K562 (cell line): ENCODE measurements at regions of chr1 and their contacts with region 1.

Region 1: GRCh38 chr1:246032031-246032551 is 475.0 kb downstream of the SMYD3 start:
- DNase-seq: no peak
- ATAC-seq: no peak
- H3K4me3 ChIP-seq: no peak overlapping the region
- H3K27ac ChIP-seq: no peak overlapping the region
- H3K4me1 ChIP-seq: peaks cover 3 to 13% of the 10 kb centered on the region in 2 experiments; a peak in 4 of 5 replicates
- H3K27me3 ChIP-seq: no peaks in the 10 kb centered on the region
- CTCF ChIP-seq: no peak
- EP300 ChIP-seq: no peak
- POLR2A ChIP-seq: no peak
- RAD21 ChIP-seq: no peak

Region 2: GRCh38 chr1:245986404-245987220 is 45.5 kb before region 1 on chr1:
- CTCF ChIA-PET with region 1: no interaction called
- POLR2A ChIA-PET with region 1: no interaction called
- in situ Hi-C with region 1: no loop called
- intact Hi-C with region 1: no loop called
- DNase-seq: peak; percentile 52 to 77 (median 60)
- ATAC-seq: peak; percentile 36
- H3K4me3 ChIP-seq: peak overlapping the region; percentile 53
- H3K27ac ChIP-seq: peak overlapping the region; percentile 78
- H3K4me1 ChIP-seq: peaks cover 4 to 38% of the 10 kb centered on the region in 2 experiments; a peak in 4 of 5 replicates
- H3K27me3 ChIP-seq: no peaks in the 10 kb centered on the region
- CTCF ChIP-seq: no peak
- EP300 ChIP-seq: peak; percentile 41
- POLR2A ChIP-seq: no peak
- RAD21 ChIP-seq: no peak

Region 3: DNA sequence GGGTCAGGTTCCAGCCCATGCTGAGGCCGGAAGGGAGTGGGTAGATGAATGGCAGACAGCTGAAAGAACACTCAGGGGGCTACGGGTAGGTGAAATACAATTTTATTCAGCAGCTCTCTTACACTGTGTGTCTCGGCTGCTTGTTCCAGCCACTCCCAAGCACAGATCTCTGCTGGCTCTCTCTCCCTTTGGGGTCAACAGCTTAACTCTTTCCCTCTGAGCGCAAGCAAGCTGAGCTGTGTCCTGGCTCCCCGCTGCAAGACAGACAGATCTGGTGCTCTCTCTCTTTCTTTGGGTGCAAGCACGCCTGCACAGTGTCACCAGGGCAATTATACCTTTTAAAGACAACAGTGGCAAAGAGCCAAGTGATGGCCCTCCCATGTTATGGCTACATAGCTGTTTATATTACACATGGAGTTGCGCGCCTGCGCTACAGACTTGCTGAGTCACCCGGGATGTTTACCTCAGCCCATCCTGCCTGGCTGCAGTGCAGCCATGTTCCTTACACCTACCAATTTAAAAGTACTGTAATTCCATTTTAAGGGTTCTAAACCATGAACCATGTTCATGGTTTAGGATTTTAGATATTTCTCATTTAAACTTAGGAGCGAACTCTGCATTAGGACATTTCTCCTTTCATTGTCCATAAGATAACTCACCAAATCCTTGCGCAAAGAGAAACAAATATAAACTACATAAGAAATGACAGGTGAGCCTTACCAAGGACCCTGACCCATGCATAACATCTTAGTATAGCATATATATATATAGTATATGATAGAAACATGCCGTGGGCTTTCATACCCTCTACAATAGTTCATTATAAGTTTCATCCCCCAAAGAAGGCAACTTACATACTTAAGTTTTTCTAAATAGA is 78.5 kb after region 1 on chr1:
- CTCF ChIA-PET with region 1: no interaction called
- POLR2A ChIA-PET with region 1: no interaction called
- in situ Hi-C with region 1: no loop called
- intact Hi-C with region 1: loop called (anchors 5 kb)
- DNase-seq: peak; percentile 76 to 92 (median 78)
- ATAC-seq: peak; percentile 87
- H3K4me3 ChIP-seq: no peak overlapping the region
- H3K27ac ChIP-seq: peak overlapping the region; percentile 71
- H3K4me1 ChIP-seq: peaks cover 15 to 65% of the 10 kb centered on the region in 2 experiments
- H3K27me3 ChIP-seq: no peaks in the 10 kb centered on the region
- CTCF ChIP-seq: no peak
- EP300 ChIP-seq: peak; percentile 64; the same call in 1 of the 2 replicates
- POLR2A ChIP-seq: no peak
- RAD21 ChIP-seq: peak; percentile 20 to 36; a peak in 2 of 4 replicates